Activated naive CD4-positive, alpha-beta T cell treated with anti-CD3 and anti-CD28 coated beads, Interleukin-2, amount 10 ng/mL, durations not matched to agents 7 days and 5 days (primary cell): ENCODE measurements at regions of chr13 and their contacts with region 1.

Region 1: DNA sequence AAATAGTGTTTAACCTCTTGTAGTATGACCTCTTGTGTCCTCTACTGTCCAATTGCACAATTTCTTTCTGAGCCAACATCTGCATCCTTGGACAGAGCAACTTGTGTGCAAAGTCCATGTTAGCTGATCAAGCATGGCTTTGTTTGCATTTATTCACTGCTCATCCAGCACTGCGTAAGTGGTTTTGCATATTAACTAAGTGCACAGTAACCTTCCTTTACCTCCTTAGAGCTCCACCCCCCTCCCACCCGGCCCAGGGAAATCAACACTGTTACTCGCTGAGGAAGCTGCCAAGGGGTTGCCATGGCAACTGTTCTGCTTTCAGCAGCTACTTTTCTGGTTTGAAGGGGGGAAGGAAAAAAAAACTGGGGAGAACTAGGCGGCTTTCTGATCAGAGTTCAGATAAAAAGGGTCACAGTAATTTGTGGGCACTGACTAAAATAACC is 153.5 kb upstream of the KLF12 start:
- DNase-seq: peak; percentile 88
- H3K4me3 Mint-ChIP-seq: peak overlapping the region; percentile 57
- H3K27ac Mint-ChIP-seq: peak overlapping the region; percentile 88
- H3K4me1 Mint-ChIP-seq: peaks cover 48% of the 10 kb centered on the region
- H3K27me3 Mint-ChIP-seq: peaks cover 3% of the 10 kb centered on the region

Region 2: DNA sequence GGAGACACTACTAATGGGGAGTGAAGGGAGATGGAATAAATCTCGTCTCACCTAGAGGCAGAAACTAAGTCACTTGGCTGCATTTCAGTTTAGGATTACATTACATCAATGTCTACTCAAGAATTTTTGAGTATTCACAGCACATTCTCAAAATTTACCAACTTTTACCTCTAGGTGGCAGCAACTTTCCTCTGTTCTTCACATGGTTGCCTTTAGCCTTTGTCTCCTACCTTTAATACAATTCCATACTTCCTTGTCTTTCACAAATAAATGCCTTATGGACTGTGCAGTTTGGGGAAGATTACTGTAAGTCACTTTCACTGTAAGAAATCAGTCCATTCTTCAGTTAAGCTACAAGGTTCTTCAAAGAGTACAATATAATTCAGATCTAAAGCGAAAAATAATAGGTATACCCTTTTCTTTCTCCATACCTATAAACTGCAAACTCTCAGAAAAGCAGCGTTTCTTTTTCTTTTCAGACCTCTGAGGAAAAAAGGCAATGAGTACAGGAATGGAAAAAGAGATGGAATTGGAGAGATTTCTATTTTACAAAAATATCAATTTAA is 532.9 kb before region 1 on chr13:
- CTCF ChIA-PET with region 1: interaction called, 20 read pairs
- DNase-seq: no peak
- H3K4me3 Mint-ChIP-seq: no peak overlapping the region
- H3K27ac Mint-ChIP-seq: no peak overlapping the region
- H3K4me1 Mint-ChIP-seq: peaks cover 21% of the 10 kb centered on the region
- H3K27me3 Mint-ChIP-seq: no peaks in the 10 kb centered on the region

Region 3: GRCh38 chr13:73984949-73985691 is 302.6 kb before region 1 on chr13:
- CTCF ChIA-PET with region 1: interaction called, 26 read pairs
- DNase-seq: peak; percentile 81
- H3K4me3 Mint-ChIP-seq: peak overlapping the region; percentile 54
- H3K27ac Mint-ChIP-seq: peak overlapping the region; percentile 93
- H3K4me1 Mint-ChIP-seq: peaks cover 31% of the 10 kb centered on the region
- H3K27me3 Mint-ChIP-seq: no peaks in the 10 kb centered on the region

Region 4: GRCh38 chr13:74133657-74134201 is 154.0 kb before region 1 on chr13:
- CTCF ChIA-PET with region 1: interaction called, 29 read pairs
- DNase-seq: peak; percentile 92
- H3K4me3 Mint-ChIP-seq: peak overlapping the region; percentile 98
- H3K27ac Mint-ChIP-seq: peak overlapping the region; percentile 100
- H3K4me1 Mint-ChIP-seq: peaks cover 34% of the 10 kb centered on the region
- H3K27me3 Mint-ChIP-seq: peaks cover 4% of the 10 kb centered on the region

Region 5: GRCh38 chr13:74248477-74248876 is 39.3 kb before region 1 on chr13:
- CTCF ChIA-PET with region 1: interaction called, 11 read pairs
- DNase-seq: no peak
- H3K4me3 Mint-ChIP-seq: no peak overlapping the region
- H3K27ac Mint-ChIP-seq: no peak overlapping the region
- H3K4me1 Mint-ChIP-seq: peaks cover 83% of the 10 kb centered on the region
- H3K27me3 Mint-ChIP-seq: peaks cover 4% of the 10 kb centered on the region

Region 6: DNA sequence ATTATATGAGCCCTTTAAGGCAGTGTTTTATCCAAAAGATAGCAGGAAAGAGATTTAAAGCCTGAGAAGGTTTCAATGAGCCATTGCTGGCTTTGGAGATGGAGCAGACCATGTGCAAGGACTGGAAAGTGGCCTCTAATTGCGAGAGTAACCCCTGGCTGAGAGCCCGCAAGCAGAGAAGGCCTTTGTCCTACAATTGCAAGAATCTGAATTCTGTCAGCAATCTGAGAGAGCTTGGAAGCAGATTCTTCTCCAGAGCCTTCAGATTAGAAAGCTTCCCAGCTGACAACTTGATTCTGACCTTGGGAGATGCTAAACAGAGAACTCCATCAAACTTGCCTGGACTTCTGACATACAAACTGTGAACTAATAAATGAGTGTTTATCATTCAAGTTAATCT is 375.2 kb after region 1 on chr13:
- CTCF ChIA-PET with region 1: no interaction called
- DNase-seq: no peak
- H3K4me3 Mint-ChIP-seq: no peak overlapping the region
- H3K27ac Mint-ChIP-seq: no peak overlapping the region
- H3K4me1 Mint-ChIP-seq: no peaks in the 10 kb centered on the region
- H3K27me3 Mint-ChIP-seq: no peaks in the 10 kb centered on the region

Region 7: DNA sequence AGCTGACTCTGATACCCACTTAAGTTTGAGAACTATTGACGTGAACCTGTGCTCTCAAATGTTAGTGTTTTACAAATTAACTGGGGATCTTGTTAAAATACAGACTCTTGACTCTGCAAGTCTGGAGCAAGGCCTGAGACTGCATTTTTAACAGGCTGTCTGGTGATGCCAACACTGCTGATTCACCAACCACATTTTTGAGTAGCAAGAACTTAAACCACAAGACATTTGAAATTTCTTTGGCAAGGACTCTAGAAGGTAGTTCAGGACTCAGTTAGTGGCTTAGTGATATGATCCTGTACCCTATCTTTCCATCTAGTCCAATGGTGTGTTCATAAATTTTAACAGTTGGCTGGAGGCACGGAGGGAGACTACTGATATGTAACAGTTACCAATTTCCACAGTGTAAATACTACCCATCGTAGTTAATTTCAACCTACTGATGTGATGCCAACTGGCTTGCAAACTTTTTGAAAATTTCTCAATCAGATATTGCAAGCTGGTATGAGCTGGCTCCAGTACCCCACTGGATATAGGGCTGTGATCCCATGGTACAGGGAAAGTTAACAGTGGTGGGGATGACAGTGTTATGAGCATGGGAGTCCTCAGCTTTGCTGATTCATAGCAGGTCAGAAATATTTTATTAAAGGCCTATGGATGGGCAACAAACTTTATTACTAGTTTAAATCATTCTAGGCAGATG is 939.1 kb after region 1 on chr13:
- CTCF ChIA-PET with region 1: no interaction called
- DNase-seq: no peak
- H3K4me3 Mint-ChIP-seq: no peak overlapping the region
- H3K27ac Mint-ChIP-seq: no peak overlapping the region
- H3K4me1 Mint-ChIP-seq: no peaks in the 10 kb centered on the region
- H3K27me3 Mint-ChIP-seq: peaks cover 3% of the 10 kb centered on the region